Caco-2 (cell line): ENCODE measurements at regions of chr20 and their contacts with region 1.

Region 1: GRCh38 chr20:38658879-38659596 is 57.4 kb downstream of the ARHGAP40 start:
- DNase-seq: peak; percentile 72 to 79
- H3K4me3 ChIP-seq: no peak overlapping the region
- H3K4me3 Mint-ChIP-seq: no peak overlapping the region
- H3K27ac Mint-ChIP-seq: no peak overlapping the region
- H3K4me1 ChIP-seq: no peaks in the 10 kb centered on the region
- H3K4me1 Mint-ChIP-seq: no peaks in the 10 kb centered on the region
- H3K27me3 ChIP-seq: peaks cover 5% of the 10 kb centered on the region; the same call in 1 of the 2 replicates
- H3K27me3 Mint-ChIP-seq: peaks cover 34% of the 10 kb centered on the region
- CTCF ChIP-seq: peak; percentile 95 to 98

Region 2: DNA sequence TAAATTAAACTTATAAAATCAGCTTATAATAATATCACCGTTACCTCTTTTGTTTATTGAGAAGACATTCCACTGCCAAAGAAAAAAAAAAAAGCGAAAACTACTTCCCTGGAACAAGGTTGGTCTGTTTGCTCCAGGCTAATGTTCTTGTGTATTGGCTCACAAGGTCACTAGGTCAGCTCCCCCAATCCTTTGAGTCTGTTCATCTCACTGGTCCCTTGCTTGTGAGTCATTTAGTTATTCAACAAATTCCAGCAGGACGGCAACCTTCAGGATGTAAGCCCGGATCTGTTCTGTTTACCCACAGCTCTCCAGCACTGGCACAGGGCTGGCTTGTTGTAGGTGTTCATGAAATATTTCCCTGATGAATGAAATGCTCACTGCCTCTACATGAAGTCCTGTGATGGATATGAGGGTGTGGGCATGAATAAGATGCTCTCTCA is 54.2 kb before region 1 on chr20:
- CTCF ChIA-PET with region 1: no interaction called
- POLR2A ChIA-PET with region 1: no interaction called
- intact Hi-C with region 1: no loop called
- DNase-seq: peak in 1 of 2 experiments; percentile 42
- H3K4me3 ChIP-seq: no peak overlapping the region
- H3K4me3 Mint-ChIP-seq: no peak overlapping the region
- H3K27ac Mint-ChIP-seq: no peak overlapping the region
- H3K4me1 ChIP-seq: 0 out of 2 replicates have a peak, but pooled peaks cover 8% of the 10 kb centered on the region
- H3K4me1 Mint-ChIP-seq: peaks cover 7% of the 10 kb centered on the region
- H3K27me3 ChIP-seq: no peaks in the 10 kb centered on the region
- H3K27me3 Mint-ChIP-seq: peaks cover 19% of the 10 kb centered on the region
- CTCF ChIP-seq: no peak

Region 3: DNA sequence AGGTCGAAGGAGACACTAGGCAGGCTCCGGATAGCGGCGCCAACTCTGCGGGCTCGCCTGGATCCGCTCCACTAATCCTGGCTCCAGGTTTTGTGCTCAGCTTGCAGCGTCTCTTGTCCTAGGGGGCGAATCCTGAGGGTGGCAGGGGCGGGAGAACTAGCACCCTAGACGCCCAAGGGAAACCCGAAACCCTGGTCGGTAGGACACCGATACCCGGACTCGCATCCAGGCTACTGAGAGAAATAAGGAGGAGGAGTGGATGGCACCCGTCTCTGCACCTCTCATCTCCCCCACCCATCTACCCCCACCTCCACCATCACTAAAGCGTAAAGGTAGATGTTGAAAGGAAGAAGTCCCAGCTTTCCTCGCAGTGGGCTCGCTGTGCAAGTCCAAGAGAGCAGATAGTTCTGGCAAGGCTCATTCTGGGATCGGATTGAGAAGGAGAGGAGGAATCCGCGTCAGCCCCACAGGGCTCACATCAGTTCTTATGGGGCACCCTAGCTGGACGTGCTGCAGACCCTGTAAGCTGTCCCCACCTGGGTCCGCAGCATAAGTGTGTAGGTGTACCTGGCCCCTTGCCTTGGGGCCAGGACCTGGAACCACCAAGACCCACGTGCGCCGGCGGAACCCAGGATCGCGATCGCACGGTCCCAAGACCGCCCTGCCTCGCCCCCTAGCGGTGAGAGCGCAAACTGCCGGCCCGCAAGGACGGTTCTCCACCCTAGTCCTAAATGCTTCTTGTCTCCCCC is 72.1 kb after region 1 on chr20:
- CTCF ChIA-PET with region 1: interaction called, 7 read pairs
- POLR2A ChIA-PET with region 1: no interaction called
- intact Hi-C with region 1: loop called (anchors 2 kb)
- DNase-seq: peak; percentile 91 to 93
- H3K4me3 ChIP-seq: peak overlapping the region; percentile 24
- H3K4me3 Mint-ChIP-seq: peak overlapping the region; percentile 69
- H3K27ac Mint-ChIP-seq: no peak overlapping the region
- H3K4me1 ChIP-seq: peaks cover 17% of the 10 kb centered on the region
- H3K4me1 Mint-ChIP-seq: peaks cover 12% of the 10 kb centered on the region
- H3K27me3 ChIP-seq: peaks cover 9% of the 10 kb centered on the region
- H3K27me3 Mint-ChIP-seq: peaks cover 66% of the 10 kb centered on the region
- CTCF ChIP-seq: peak; percentile 100

Region 4: GRCh38 chr20:38748097-38748860 is 89.2 kb after region 1 on chr20 and contains the start of gene ACTR5:
- CTCF ChIA-PET with region 1: interaction called, 13 read pairs
- POLR2A ChIA-PET with region 1: no interaction called
- intact Hi-C with region 1: no loop called
- DNase-seq: peak; percentile 99 to 100
- H3K4me3 ChIP-seq: peak within 1 kb of the TSS; percentile 57
- H3K4me3 Mint-ChIP-seq: peak within 1 kb of the TSS; percentile 81
- H3K27ac Mint-ChIP-seq: peak within 1 kb of the TSS; percentile 85
- H3K4me1 ChIP-seq: peaks cover 14% of the 10 kb centered on the region
- H3K4me1 Mint-ChIP-seq: peaks cover 10% of the 10 kb centered on the region
- H3K27me3 ChIP-seq: no peaks in the 10 kb centered on the region
- H3K27me3 Mint-ChIP-seq: no peaks in the 10 kb centered on the region
- CTCF ChIP-seq: no peak
- total RNA-seq, gene ACTR5: 18.2 and 20.0 TPM in 2 replicates

Region 5: DNA sequence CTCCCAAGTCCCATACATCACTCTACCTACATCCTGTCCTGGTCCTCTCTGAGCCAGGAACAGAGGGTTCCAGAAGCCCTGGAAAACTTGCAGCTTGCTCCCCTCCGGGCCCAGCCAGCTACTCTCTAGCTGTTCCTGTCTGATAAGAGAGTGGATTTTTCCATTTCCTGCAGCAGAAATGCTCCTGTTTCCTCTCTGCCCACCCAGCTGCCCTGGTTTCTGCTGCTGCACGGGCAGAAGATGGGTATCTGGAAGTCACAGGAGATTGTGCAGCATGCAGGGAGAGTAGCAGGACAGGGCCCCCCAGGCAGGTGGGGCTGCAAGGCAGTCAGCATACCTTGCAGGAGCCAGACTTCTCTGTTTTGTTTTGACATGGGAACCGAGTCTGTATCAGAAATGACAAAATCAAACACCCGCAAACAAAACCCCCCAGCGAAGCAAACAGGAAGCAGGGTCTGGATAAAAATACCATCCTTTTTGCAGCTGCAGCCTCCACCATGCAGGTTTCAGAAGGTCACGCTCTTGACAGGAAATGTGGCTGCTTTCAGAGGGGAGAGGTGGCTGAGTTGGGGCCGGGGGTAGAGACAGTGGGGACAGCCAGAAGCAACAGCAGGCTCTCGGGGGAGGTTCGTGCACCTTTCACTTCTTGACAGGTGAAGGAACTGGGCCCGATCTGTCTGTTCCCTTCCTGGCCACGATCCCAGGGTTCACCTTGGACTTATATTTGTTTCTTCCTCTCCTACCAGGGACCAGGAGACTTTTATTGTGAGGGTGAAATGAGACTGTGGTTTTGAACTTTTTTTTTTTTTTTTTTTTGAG is 216.3 kb after region 1 on chr20:
- CTCF ChIA-PET with region 1: no interaction called
- POLR2A ChIA-PET with region 1: no interaction called
- intact Hi-C with region 1: loop called (anchors 10 kb)
- DNase-seq: no peak
- H3K4me3 ChIP-seq: no peak overlapping the region
- H3K4me3 Mint-ChIP-seq: no peak overlapping the region
- H3K27ac Mint-ChIP-seq: no peak overlapping the region
- H3K4me1 ChIP-seq: peaks cover 8% of the 10 kb centered on the region
- H3K4me1 Mint-ChIP-seq: peaks cover 9% of the 10 kb centered on the region
- H3K27me3 ChIP-seq: no peaks in the 10 kb centered on the region; the same call in none of the 2 replicates
- H3K27me3 Mint-ChIP-seq: peaks cover 26% of the 10 kb centered on the region
- CTCF ChIP-seq: no peak